Activated T-helper 2 cell treated with anti-CD3 and anti-CD28 coated beads, Interferon-gamma antibody, Interleukin-2, Interleukin-4, amounts not matched to agents 10 μg/mL and 5 μg/mL and 100 μg/mL, durations not matched to agents 14 hours and 24 hours and 36 hours (primary cell): ENCODE measurements at regions of chr9 and their contacts with region 1.

Region 1: GRCh38 chr9:8895861-8896224 is 1096.3 kb upstream of the DMAC1 start:
- DNase-seq: no peak
- H3K4me3 Mint-ChIP-seq: no peak overlapping the region
- H3K27ac Mint-ChIP-seq: no peak overlapping the region
- H3K4me1 Mint-ChIP-seq: no peaks in the 10 kb centered on the region
- H3K27me3 Mint-ChIP-seq: peaks cover 1% of the 10 kb centered on the region

Region 2: GRCh38 chr9:7570107-7570720 is 1325.6 kb before region 1 on chr9:
- intact Hi-C with region 1: loop called (anchors 5 kb)
- DNase-seq: peak; percentile 39
- H3K4me3 Mint-ChIP-seq: no peak overlapping the region
- H3K27ac Mint-ChIP-seq: no peak overlapping the region
- H3K4me1 Mint-ChIP-seq: peaks cover 8% of the 10 kb centered on the region
- H3K27me3 Mint-ChIP-seq: peaks cover 8% of the 10 kb centered on the region